B cell (primary cell): ENCODE measurements at regions of chr17 and their contacts with region 1.

Region 1: GRCh38 chr17:57671667-57672632 is 73.1 kb downstream of the CCDC182 start:
- DNase-seq: peak; percentile 81
- ATAC-seq: peak; percentile 97
- H3K4me3 ChIP-seq: no peak overlapping the region
- H3K4me3 Mint-ChIP-seq: no peak overlapping the region
- H3K27ac ChIP-seq: no peak overlapping the region
- H3K27ac Mint-ChIP-seq: no peak overlapping the region
- H3K4me1 ChIP-seq: peaks cover 1 to 7% of the 10 kb centered on the region in 2 donors
- H3K4me1 Mint-ChIP-seq: peaks cover 9% of the 10 kb centered on the region
- H3K27me3 ChIP-seq: no peaks in the 10 kb centered on the region
- H3K27me3 Mint-ChIP-seq: no peaks in the 10 kb centered on the region
- CTCF ChIP-seq: peak; percentile 95

Region 2: DNA sequence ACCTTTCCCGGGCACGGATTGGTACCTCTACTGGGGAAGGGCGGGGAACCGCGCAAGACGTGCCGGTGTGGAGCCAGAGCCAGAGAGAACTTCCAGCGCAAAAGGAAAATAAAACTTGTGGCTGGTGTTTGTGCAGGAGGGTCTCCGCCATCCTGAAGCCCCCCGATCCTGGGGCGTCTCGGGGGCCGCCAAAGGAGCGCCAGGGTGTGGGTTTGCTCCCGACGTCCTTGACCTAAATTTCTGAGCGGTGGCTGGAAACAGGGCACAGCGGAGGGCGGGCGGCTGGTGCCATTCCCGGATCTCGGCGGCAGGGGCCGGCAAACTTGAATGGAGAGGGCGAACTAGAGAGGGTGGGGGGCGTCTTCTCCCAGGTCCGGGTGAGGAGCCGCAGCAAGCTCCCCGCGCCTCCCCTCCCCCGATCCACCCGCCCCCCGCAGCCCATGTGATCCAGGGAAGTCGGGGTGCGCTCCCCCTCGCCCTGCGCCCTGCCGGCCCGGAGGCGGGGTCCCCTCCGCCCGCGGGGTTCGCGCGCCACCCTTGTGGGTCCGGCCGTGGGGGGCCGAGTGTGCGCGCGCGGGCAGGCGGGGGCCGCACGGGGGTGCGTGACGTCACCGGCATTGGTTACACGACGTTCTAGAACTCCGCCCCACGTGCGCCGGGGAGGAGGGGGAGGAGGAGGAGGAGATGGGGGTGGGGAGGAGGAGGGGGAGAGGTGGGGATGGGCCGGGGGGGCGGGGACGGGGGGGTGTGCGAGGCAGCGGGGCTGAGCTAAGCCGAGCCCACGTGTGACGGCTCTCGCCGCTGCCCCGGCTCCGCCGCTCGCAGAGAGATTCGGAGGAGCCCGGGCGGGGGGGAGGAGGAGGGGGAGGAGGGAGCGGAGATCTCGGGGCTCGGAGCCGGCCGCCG is 415.9 kb before region 1 on chr17 and contains the start of gene MSI2:
- CTCF ChIA-PET with region 1: interaction called, 8 read pairs
- POLR2A ChIA-PET with region 1: interaction called, 3 read pairs
- intact Hi-C with region 1: loop called (anchors 5 kb)
- DNase-seq: peak; percentile 94
- ATAC-seq: peak; percentile 79
- H3K4me3 ChIP-seq: peak within 1 kb of the TSS; percentile 67 to 97 (median 76)
- H3K4me3 Mint-ChIP-seq: peak within 1 kb of the TSS; percentile 92
- H3K27ac ChIP-seq: peak within 1 kb of the TSS; percentile 65 to 66
- H3K27ac Mint-ChIP-seq: peak within 1 kb of the TSS; percentile 85
- H3K4me1 ChIP-seq: peaks cover 34 to 44% of the 10 kb centered on the region in 2 donors
- H3K4me1 Mint-ChIP-seq: peaks cover 38% of the 10 kb centered on the region
- H3K27me3 ChIP-seq: no peaks in the 10 kb centered on the region
- H3K27me3 Mint-ChIP-seq: no peaks in the 10 kb centered on the region
- CTCF ChIP-seq: no peak
- total RNA-seq, gene MSI2: 196 and 222 TPM in 2 replicates

Region 3: GRCh38 chr17:57552114-57552624 is 119.8 kb before region 1 on chr17:
- CTCF ChIA-PET with region 1: interaction called, 64 read pairs
- POLR2A ChIA-PET with region 1: interaction called, 3 read pairs
- intact Hi-C with region 1: loop called (anchors 5 kb)
- DNase-seq: peak; percentile 81
- ATAC-seq: peak; percentile 31
- H3K4me3 ChIP-seq: peak overlapping the region in 4 of 5 experiments; percentile 32 to 55 (median 48)
- H3K4me3 Mint-ChIP-seq: peak overlapping the region; percentile 81
- H3K27ac ChIP-seq: peak overlapping the region; percentile 96 to 97
- H3K27ac Mint-ChIP-seq: peak overlapping the region; percentile 87
- H3K4me1 ChIP-seq: peaks cover 94 to 100% of the 10 kb centered on the region in 2 donors
- H3K4me1 Mint-ChIP-seq: peaks cover 98% of the 10 kb centered on the region
- H3K27me3 ChIP-seq: no peaks in the 10 kb centered on the region
- H3K27me3 Mint-ChIP-seq: no peaks in the 10 kb centered on the region
- CTCF ChIP-seq: peak; percentile 77

Region 4: DNA sequence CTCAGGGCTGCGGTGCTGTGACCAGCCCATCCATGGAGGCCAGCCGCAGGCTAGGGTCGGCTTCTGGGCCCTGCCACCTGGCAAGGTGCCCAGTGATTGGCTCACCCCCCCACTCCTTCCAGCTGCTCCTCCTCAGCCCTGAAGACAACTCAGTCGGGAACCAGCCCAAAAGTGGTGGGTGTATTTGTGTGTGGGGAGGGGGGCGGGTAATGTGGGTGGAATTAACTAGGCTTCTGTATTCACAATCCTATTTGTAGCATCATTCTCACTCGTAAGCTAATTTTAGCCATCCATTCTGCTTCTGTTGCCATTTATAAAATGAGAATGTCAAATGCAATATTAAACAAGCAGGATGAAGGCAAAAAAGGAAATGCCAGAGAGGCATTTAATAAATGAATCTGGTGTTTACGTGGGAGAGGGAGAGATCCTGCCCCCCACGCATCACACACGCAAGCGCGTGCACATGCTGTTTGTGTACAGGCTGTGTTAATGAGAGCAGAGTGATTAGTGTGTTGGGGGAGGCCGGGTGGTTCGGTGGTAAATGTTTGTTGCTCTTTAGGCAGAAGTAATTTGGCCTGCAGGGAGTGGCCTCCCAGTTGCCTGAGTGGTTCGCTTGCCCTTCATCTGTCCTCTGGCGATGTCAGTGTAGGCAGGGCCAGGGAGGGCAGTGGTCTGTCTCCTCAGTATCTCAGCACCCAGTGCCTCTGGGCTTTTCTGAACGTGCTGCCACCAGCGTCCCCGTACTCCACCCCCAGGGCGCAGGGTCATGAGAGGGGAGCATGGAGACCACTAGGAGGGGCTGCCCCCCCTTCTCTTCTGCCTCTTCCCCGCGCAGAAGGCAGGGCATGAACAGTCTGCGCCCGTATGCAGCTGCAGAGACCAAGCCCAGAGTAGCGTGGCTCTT is 66.9 kb before region 1 on chr17:
- CTCF ChIA-PET with region 1: interaction called, 85 read pairs
- POLR2A ChIA-PET with region 1: no interaction called
- intact Hi-C with region 1: loop called (anchors 2 kb)
- DNase-seq: peak; percentile 88
- ATAC-seq: peak; percentile 77
- H3K4me3 ChIP-seq: peak overlapping the region in 1 of 5 experiments; percentile 42
- H3K4me3 Mint-ChIP-seq: peak overlapping the region; percentile 79
- H3K27ac ChIP-seq: peak overlapping the region; percentile 73 to 78
- H3K27ac Mint-ChIP-seq: peak overlapping the region; percentile 96
- H3K4me1 ChIP-seq: peaks cover 44 to 60% of the 10 kb centered on the region in 2 donors
- H3K4me1 Mint-ChIP-seq: peaks cover 62% of the 10 kb centered on the region
- H3K27me3 ChIP-seq: no peaks in the 10 kb centered on the region
- H3K27me3 Mint-ChIP-seq: no peaks in the 10 kb centered on the region
- CTCF ChIP-seq: peak; percentile 41

Region 5: GRCh38 chr17:57629470-57629869 is 42.5 kb before region 1 on chr17:
- CTCF ChIA-PET with region 1: interaction called, 33 read pairs
- POLR2A ChIA-PET with region 1: no interaction called
- intact Hi-C with region 1: no loop called
- DNase-seq: peak; percentile 84
- ATAC-seq: peak; percentile 88
- H3K4me3 ChIP-seq: no peak overlapping the region
- H3K4me3 Mint-ChIP-seq: peak overlapping the region; percentile 71
- H3K27ac ChIP-seq: peak overlapping the region; percentile 63 to 66
- H3K27ac Mint-ChIP-seq: peak overlapping the region; percentile 92
- H3K4me1 ChIP-seq: peaks cover 37 to 52% of the 10 kb centered on the region in 2 donors
- H3K4me1 Mint-ChIP-seq: peaks cover 50% of the 10 kb centered on the region
- H3K27me3 ChIP-seq: no peaks in the 10 kb centered on the region
- H3K27me3 Mint-ChIP-seq: no peaks in the 10 kb centered on the region
- CTCF ChIP-seq: no peak

Region 6: GRCh38 chr17:57747221-57748017 is 75.5 kb after region 1 on chr17:
- CTCF ChIA-PET with region 1: interaction called, 19 read pairs
- POLR2A ChIA-PET with region 1: no interaction called
- intact Hi-C with region 1: loop called (anchors 5 kb)
- DNase-seq: peak; percentile 75
- ATAC-seq: peak; percentile 73
- H3K4me3 ChIP-seq: no peak overlapping the region
- H3K4me3 Mint-ChIP-seq: no peak overlapping the region
- H3K27ac ChIP-seq: no peak overlapping the region
- H3K27ac Mint-ChIP-seq: no peak overlapping the region
- H3K4me1 ChIP-seq: peaks cover 12 to 14% of the 10 kb centered on the region in 2 donors
- H3K4me1 Mint-ChIP-seq: peaks cover 17% of the 10 kb centered on the region
- H3K27me3 ChIP-seq: peaks cover 0 to 4% (median 0%) of the 10 kb centered on the region in 4 experiments
- H3K27me3 Mint-ChIP-seq: peaks cover 14% of the 10 kb centered on the region
- CTCF ChIP-seq: peak; percentile 82